ENCODE measurements at regions of chr17 and their contacts with region 1.

Region 1: DNA sequence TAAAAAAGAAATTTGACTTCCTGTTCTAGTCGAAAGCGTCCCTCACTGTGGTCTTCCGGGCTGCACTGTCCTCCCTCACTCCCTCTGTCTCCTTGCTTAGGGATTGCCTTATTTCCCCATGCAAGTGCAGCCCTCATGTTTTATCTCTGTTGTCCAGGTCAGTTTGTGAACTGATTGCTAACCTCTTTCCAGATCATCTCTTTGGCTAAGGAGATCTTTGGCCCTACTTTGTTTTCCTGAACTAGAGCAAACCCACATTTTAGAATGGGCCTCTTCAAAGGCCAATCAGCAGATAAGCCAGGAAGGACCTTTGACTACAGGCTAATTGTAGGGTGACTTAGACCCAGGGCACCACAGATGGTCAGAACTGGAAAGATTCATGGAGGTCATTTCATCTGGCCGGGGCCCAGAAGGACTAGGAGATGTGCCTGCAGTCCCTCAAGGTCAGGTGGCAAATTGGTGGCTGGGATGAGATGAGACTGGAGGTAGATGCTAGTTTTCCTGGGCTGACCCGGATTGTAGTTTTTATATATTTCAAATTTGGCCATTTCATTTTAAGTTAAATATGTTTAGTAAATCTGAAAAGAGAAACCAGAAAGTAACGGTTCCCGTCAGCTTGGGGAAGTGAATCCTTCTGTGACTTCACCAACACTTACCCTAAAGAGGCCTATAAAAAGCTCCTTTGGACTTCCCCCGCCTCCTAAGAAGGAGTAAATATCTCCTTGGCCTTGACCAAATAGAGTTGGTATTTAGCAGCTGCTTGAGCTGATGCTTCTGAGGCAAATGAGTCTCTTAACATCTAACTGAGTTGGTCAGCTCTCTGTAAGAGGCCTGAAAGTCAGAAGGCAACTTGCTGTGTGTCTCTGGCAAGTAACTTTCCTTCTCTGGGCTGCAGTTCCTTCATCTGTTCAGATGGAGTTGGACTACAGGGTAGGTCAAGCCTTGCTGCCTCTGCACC is 6.2 kb upstream of the SLC25A19 start:
- DNase-seq: peak; percentile 92
- ATAC-seq: peak; percentile 70
- H3K4me3 ChIP-seq: peak overlapping the region in 4 of 5 experiments; percentile 12 to 59 (median 28)
- H3K4me3 Mint-ChIP-seq: peak overlapping the region; percentile 62
- H3K27ac ChIP-seq: peak overlapping the region; percentile 98
- H3K27ac Mint-ChIP-seq: peak overlapping the region; percentile 95
- H3K4me1 ChIP-seq: peaks cover 52 to 69% of the 10 kb centered on the region in 2 donors
- H3K4me1 Mint-ChIP-seq: peaks cover 43% of the 10 kb centered on the region
- H3K27me3 ChIP-seq: no peaks in the 10 kb centered on the region
- H3K27me3 Mint-ChIP-seq: no peaks in the 10 kb centered on the region
- CTCF ChIP-seq: no peak

Region 2: DNA sequence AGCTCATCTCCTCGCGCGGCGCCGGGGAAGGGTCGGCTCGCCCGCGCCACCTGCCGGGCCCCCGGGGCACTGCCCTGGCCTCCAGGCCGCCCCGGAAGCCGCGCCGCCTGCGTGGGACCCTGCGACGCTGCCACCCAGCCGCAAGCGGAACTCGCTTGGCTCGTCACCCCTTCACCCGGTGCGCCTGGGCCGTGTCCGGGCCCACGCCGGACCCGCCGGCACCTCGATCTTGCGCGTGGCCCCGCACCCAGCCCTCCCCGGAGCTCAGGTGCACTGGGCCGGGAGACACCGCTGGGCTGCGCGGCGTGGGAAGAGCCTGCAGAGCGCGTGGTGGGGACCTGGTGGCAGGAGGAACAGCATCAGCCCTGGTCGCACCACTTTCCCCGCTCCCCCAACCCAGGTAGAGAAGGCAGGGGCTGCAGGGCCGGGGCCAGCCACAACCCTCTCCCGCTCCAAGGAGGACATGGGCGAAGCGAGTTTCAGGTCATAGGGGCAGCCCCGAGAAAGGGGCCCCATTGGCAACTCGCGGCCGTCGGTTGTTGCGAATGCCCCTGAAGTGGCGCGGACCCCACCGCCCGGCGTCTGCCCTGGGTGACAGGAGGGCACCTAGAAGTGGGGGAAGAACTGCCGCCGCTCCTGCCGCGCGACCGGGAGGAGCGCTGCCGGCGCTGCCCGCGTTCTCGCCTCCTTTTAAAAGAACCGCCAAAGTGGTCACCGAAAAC is 24.1 kb before region 1 on chr17:
- CTCF ChIA-PET with region 1: interaction called, 52 read pairs
- POLR2A ChIA-PET with region 1: interaction called, 23 read pairs
- intact Hi-C with region 1: no loop called
- DNase-seq: peak; percentile 94
- ATAC-seq: peak; percentile 90
- H3K4me3 ChIP-seq: peak overlapping the region; percentile 26 to 93 (median 74)
- H3K4me3 Mint-ChIP-seq: peak overlapping the region; percentile 88
- H3K27ac ChIP-seq: peak overlapping the region; percentile 78 to 83
- H3K27ac Mint-ChIP-seq: peak overlapping the region; percentile 82
- H3K4me1 ChIP-seq: peaks cover 17 to 28% of the 10 kb centered on the region in 2 donors
- H3K4me1 Mint-ChIP-seq: peaks cover 23% of the 10 kb centered on the region
- H3K27me3 ChIP-seq: no peaks in the 10 kb centered on the region
- H3K27me3 Mint-ChIP-seq: no peaks in the 10 kb centered on the region
- CTCF ChIP-seq: peak; percentile 73

Region 3: DNA sequence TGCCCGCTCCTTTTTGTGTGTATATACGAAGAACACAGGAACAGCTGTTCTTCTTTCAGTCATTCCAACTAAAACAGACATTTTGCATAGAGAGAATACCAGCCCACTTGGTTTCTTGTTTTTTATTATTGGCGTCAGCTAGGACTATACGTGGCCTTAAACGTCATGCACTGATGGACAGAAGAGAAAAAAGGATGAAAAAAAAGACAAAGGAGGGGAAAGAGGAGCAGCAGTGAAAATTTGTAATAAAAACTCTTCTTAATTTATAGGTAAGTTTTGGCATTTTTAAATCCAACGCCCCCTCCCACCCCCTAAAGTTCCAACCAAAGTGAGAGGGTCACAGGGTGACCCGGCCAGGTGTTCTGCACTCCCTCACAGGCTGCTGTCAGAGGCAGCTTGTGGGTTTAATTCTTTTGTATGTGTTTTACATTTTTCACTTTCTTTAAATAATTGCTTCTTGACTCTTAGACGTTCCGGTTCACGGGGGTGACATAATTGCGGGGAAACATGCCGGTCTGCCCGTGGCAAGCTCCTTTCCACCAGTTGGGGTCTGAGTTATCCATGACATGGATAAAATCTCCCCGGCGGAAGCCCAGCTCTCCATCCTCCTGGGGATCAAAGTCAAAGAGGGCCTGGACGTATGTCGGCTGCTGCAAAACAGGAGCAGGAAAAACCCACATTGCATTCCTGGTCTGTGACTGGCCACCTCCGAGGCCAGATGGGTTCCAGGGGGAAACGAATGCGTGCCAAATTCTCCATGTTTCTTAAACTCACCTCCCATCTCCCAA is 24.6 kb after region 1 on chr17:
- CTCF ChIA-PET with region 1: interaction called, 84 read pairs
- POLR2A ChIA-PET with region 1: interaction called, 103 read pairs
- intact Hi-C with region 1: loop called (anchors 1 kb)
- DNase-seq: peak; percentile 57
- ATAC-seq: peak; percentile 59
- H3K4me3 ChIP-seq: no peak overlapping the region
- H3K4me3 Mint-ChIP-seq: peak overlapping the region; percentile 77
- H3K27ac ChIP-seq: peak overlapping the region; percentile 71 to 81
- H3K27ac Mint-ChIP-seq: peak overlapping the region; percentile 92
- H3K4me1 ChIP-seq: peaks cover 39 to 73% of the 10 kb centered on the region in 2 donors
- H3K4me1 Mint-ChIP-seq: peaks cover 64% of the 10 kb centered on the region
- H3K27me3 ChIP-seq: no peaks in the 10 kb centered on the region
- H3K27me3 Mint-ChIP-seq: no peaks in the 10 kb centered on the region
- CTCF ChIP-seq: no peak

Region 4: GRCh38 chr17:75405365-75406221 is 110.1 kb after region 1 on chr17 and contains the start of gene GRB2:
- CTCF ChIA-PET with region 1: interaction called, 76 read pairs
- POLR2A ChIA-PET with region 1: interaction called, 25 read pairs
- intact Hi-C with region 1: loop called (anchors 2 kb)
- DNase-seq: peak; percentile 98
- ATAC-seq: peak; percentile 89
- H3K4me3 ChIP-seq: peak within 1 kb of the TSS; percentile 91 to 99 (median 99)
- H3K4me3 Mint-ChIP-seq: peak within 1 kb of the TSS; percentile 98
- H3K27ac ChIP-seq: peak within 1 kb of the TSS; percentile 79 to 92
- H3K27ac Mint-ChIP-seq: peak within 1 kb of the TSS; percentile 97
- H3K4me1 ChIP-seq: peaks cover 32 to 43% of the 10 kb centered on the region in 2 donors
- H3K4me1 Mint-ChIP-seq: peaks cover 39% of the 10 kb centered on the region
- H3K27me3 ChIP-seq: no peaks in the 10 kb centered on the region
- H3K27me3 Mint-ChIP-seq: no peaks in the 10 kb centered on the region
- CTCF ChIP-seq: no peak
- total RNA-seq, gene GRB2: 219 and 224 TPM in 2 replicates

Region 5: DNA sequence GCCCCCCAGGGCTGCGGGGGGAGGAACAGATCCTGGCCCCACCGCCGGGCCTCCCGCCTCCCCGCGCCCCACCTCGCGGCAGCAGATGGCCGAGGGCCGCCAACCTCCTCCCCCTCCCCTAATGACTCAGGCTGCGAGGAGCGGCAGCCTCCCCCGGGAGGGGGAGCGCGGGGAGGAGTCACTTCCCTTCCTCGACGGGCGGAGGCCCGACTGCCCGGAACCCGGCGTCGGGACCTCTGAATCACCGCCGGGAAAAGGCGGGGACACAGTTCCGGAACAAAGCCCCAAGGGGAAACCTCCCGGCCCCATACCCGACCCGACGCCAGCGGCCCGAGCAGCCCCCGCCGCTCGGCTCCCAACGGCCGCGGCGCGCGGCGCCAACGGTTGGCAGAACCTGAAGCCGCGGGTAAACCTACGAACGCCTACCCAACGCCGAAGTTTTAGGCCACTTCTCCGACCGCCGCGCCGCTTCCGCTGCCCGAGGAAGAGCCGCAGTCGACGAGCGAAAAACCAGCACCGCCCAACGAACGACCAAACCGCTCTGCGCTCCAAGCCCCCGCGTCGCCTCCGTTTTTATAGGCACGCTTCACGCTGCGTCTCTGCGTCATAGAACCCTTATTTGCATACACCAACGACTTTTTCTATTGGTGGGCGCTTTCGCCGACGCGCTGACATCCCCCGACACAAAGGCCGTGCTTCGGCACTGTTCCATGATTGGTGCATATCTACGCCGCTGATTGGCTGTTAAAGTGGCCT is 483.9 kb after region 1 on chr17:
- CTCF ChIA-PET with region 1: interaction called, 3 read pairs
- POLR2A ChIA-PET with region 1: interaction called, 15 read pairs
- intact Hi-C with region 1: no loop called
- DNase-seq: peak; percentile 99
- ATAC-seq: peak; percentile 62
- H3K4me3 ChIP-seq: peak overlapping the region; percentile 89 to 95 (median 95)
- H3K4me3 Mint-ChIP-seq: peak overlapping the region; percentile 94
- H3K27ac ChIP-seq: peak overlapping the region; percentile 88 to 97
- H3K27ac Mint-ChIP-seq: peak overlapping the region; percentile 99
- H3K4me1 ChIP-seq: peaks cover 36 to 59% of the 10 kb centered on the region in 2 donors
- H3K4me1 Mint-ChIP-seq: peaks cover 63% of the 10 kb centered on the region
- H3K27me3 ChIP-seq: no peaks in the 10 kb centered on the region
- H3K27me3 Mint-ChIP-seq: no peaks in the 10 kb centered on the region
- CTCF ChIP-seq: no peak

Measured in B cell (primary cell).